Sigmoid colon (tissue), 7 donors: ENCODE measurements at regions of chr4 and their contacts with region 1.

Region 1: GRCh38 chr4:118772081-118772766 is 63.7 kb downstream of the SEC24D start:
- DNase-seq: no peak
- H3K4me3 ChIP-seq: peak overlapping the region in 3 of 4 donors; percentile 10 to 28 (median 22)
- H3K27ac ChIP-seq: peak overlapping the region; percentile 83 to 88 (median 85)
- H3K4me1 ChIP-seq: peaks cover 0 to 68% (median 51%) of the 10 kb centered on the region in 4 donors
- H3K27me3 ChIP-seq: no peaks in the 10 kb centered on the region
- CTCF ChIP-seq: peak; percentile 47 to 68 (median 64)
- EP300 ChIP-seq: no peak
- POLR2A ChIP-seq: no peak

Region 2: GRCh38 chr4:118740869-118741268 is 31.4 kb before region 1 on chr4:
- intact Hi-C with region 1: loop called (anchors 2 kb)
- DNase-seq: no peak
- H3K4me3 ChIP-seq: peak overlapping the region; percentile 11 to 21 (median 16)
- H3K27ac ChIP-seq: peak overlapping the region; percentile 48 to 88 (median 85)
- H3K4me1 ChIP-seq: peaks cover 0 to 93% (median 56%) of the 10 kb centered on the region in 4 donors
- H3K27me3 ChIP-seq: no peaks in the 10 kb centered on the region
- CTCF ChIP-seq: peak in 2 of 4 experiments; percentile 20 to 47
- EP300 ChIP-seq: no peak
- POLR2A ChIP-seq: no peak

Region 3: DNA sequence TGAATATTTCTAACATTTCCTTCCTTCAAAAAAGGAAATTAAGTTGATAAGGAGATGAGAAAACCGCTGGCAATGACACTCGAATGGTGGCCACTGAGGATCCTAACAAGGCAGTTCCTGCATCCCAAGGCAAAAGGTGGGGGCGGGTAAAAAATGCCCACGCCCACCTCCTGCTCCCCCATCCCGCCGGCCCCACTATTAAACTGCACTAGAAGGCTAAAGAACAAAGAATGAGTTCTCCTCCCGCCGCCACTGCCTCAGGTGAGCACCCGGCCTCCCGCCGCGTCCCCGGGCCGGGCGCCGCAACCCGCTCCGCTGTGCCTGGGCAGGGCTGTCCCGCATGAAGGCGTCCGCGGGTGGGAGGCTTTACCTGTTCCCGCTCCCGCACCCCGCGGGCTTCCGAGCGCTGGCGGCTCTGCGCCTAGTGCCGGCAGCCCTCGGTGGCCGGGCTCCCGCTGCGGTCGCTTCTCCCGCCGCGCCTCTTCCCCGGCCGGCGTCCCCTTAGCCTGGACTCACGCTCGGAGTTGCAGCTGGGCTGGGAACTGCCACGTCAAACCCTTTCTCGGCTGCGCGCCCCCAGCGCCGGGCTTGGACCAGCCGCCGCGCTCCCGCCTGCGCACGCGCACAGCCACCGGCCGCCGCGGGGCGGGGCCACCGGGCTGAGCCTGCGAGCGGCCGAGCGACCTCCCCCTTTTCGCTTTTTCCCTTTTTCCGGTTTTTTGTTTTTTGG is 63.5 kb after region 1 on chr4 and contains the start of gene SEC24D:
- intact Hi-C with region 1: loop called (anchors 5 kb)
- DNase-seq: peak; percentile 95
- H3K4me3 ChIP-seq: peak within 1 kb of the TSS; percentile 83 to 93 (median 89)
- H3K27ac ChIP-seq: peak within 1 kb of the TSS; percentile 96 to 98 (median 98)
- H3K4me1 ChIP-seq: peaks cover 0 to 37% (median 26%) of the 10 kb centered on the region in 4 donors
- H3K27me3 ChIP-seq: no peaks in the 10 kb centered on the region
- CTCF ChIP-seq: no peak
- EP300 ChIP-seq: no peak
- POLR2A ChIP-seq: peak; percentile 59 to 61
- total RNA-seq, gene SEC24D: 27.6 to 42.4 (median 33.4) TPM